WTC11 (cell line): ENCODE measurements at regions of chr19 and their contacts with region 1.

Region 1: GRCh38 chr19:4352701-4353121 is 9.3 kb downstream of the MPND start:
- DNase-seq: peak; percentile 78
- ATAC-seq: peak; percentile 84
- H3K4me3 Mint-ChIP-seq: no peak overlapping the region
- H3K27ac Mint-ChIP-seq: no peak overlapping the region
- H3K4me1 Mint-ChIP-seq: no peaks in the 10 kb centered on the region
- H3K27me3 Mint-ChIP-seq: no peaks in the 10 kb centered on the region
- CTCF ChIP-seq: peak; percentile 77

Region 2: GRCh38 chr19:4278419-4279266 is 74.1 kb before region 1 on chr19 and contains the start of gene SHD:
- CTCF ChIA-PET with region 1: interaction called, 16 read pairs
- POLR2A ChIA-PET with region 1: no interaction called
- DNase-seq: peak; percentile 48
- ATAC-seq: peak; percentile 21
- H3K4me3 Mint-ChIP-seq: peak within 1 kb of the TSS; percentile 90
- H3K27ac Mint-ChIP-seq: no peak within 1 kb of the TSS
- H3K4me1 Mint-ChIP-seq: peaks cover 8% of the 10 kb centered on the region; the same call in 1 of the 2 replicates
- H3K27me3 Mint-ChIP-seq: peaks cover 57% of the 10 kb centered on the region
- CTCF ChIP-seq: no peak
- total RNA-seq, gene SHD: 2.0 to 3.6 TPM (median 3.4 TPM) in 3 replicates

Region 3: DNA sequence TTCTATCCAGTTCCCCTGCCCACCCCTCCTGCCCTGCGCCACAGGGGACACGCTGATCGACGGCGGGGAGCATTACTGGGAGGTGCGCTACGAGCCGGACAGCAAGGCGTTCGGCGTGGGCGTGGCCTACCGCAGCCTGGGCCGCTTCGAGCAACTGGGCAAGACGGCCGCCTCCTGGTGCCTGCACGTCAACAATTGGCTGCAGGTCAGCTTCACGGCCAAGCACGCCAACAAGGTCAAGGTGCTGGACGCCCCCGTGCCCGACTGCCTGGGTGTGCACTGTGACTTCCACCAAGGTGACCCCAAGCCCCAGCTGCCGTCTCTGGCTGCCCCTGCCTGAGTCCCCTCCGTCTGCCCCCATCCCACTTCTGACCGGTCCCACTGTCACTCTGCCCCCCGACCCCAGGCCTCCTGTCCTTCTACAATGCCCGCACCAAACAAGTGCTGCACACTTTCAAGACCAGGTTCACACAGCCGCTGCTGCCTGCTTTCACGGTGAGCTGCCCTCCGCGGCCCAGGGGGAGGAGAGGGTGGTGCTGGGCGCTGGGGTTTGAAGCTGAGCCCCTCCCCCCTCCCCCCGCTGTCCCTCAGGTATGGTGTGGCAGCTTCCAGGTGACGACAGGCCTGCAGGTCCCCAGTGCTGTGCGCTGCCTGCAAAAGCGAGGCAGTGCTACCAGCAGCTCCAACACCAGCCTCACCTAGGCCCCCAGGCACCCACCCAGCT is 29.6 kb before region 1 on chr19:
- CTCF ChIA-PET with region 1: interaction called, 19 read pairs
- POLR2A ChIA-PET with region 1: no interaction called
- DNase-seq: no peak
- ATAC-seq: no peak
- H3K4me3 Mint-ChIP-seq: no peak overlapping the region
- H3K27ac Mint-ChIP-seq: no peak overlapping the region
- H3K4me1 Mint-ChIP-seq: peaks cover 10% of the 10 kb centered on the region
- H3K27me3 Mint-ChIP-seq: peaks cover 3% of the 10 kb centered on the region
- CTCF ChIP-seq: no peak

Region 4: GRCh38 chr19:4362861-4363510 is 10.3 kb after region 1 on chr19:
- CTCF ChIA-PET with region 1: interaction called, 28 read pairs
- POLR2A ChIA-PET with region 1: interaction called, 3 read pairs
- DNase-seq: peak; percentile 44
- ATAC-seq: peak; percentile 43
- H3K4me3 Mint-ChIP-seq: no peak overlapping the region
- H3K27ac Mint-ChIP-seq: no peak overlapping the region
- H3K4me1 Mint-ChIP-seq: peaks cover 10% of the 10 kb centered on the region
- H3K27me3 Mint-ChIP-seq: no peaks in the 10 kb centered on the region
- CTCF ChIP-seq: no peak

Region 5: DNA sequence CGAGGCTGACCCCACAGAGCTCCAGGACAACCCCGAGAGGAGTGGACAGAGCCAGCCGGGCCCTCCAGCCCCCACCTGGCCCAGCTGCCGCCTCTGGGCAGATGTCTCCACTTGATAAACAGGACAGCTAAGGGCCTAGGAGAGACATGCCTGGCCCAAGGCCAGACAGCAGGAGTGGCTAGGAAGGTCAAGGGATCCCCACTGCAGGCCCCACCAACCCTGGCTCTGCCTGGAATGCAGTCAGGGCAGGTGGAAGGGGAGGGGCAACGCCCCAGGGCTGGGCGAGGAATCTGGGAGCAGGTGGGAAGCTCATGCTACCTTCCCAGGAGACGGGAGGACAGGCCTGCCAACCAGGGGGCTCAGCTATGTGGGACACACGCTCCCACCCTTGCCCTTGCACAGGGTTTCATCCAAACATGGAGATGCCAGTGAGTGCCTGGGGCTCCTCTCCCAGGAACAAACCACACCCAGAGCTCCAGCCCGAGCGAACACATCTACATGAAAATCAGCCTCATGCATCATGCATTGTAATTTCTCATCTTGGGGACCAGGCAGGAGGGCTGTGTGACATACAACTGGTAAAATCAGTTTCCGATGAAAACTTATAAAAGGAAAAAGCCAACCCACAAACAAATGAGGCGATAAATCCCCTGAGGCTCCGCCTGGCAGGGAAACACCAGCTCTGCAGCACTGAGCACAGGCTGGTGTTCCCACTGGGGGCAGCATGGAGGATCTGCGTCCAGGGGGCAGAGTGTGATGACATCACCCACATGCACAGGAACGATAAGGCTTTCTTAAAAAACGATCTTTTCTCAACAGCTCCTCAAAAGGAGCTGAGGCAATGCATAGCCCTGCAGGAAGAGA is 22.7 kb after region 1 on chr19:
- CTCF ChIA-PET with region 1: interaction called, 36 read pairs
- POLR2A ChIA-PET with region 1: no interaction called
- DNase-seq: peak; percentile 84
- ATAC-seq: peak; percentile 79
- H3K4me3 Mint-ChIP-seq: no peak overlapping the region
- H3K27ac Mint-ChIP-seq: peak overlapping the region; percentile 88
- H3K4me1 Mint-ChIP-seq: peaks cover 47% of the 10 kb centered on the region
- H3K27me3 Mint-ChIP-seq: no peaks in the 10 kb centered on the region
- CTCF ChIP-seq: no peak

Region 6: GRCh38 chr19:4400135-4400936 is 47.6 kb after region 1 on chr19 and contains the start of gene SH3GL1:
- CTCF ChIA-PET with region 1: interaction called, 11 read pairs
- POLR2A ChIA-PET with region 1: no interaction called
- DNase-seq: peak; percentile 89
- ATAC-seq: peak; percentile 74
- H3K4me3 Mint-ChIP-seq: peak within 1 kb of the TSS; percentile 96
- H3K27ac Mint-ChIP-seq: peak within 1 kb of the TSS; percentile 97
- H3K4me1 Mint-ChIP-seq: peaks cover 38% of the 10 kb centered on the region
- H3K27me3 Mint-ChIP-seq: no peaks in the 10 kb centered on the region
- CTCF ChIP-seq: peak; percentile 92
- total RNA-seq, gene SH3GL1: 89.4 to 109 TPM (median 89.7 TPM) in 3 replicates